HepG2 (cell line): ENCODE measurements at regions of chrX and their contacts with region 1.

Region 1: GRCh38 chrX:2391869-2392606 is 108.7 kb downstream of the DHRSX start:
- DNase-seq: peak; percentile 92
- ATAC-seq: peak; percentile 98
- H3K4me3 ChIP-seq: no peak overlapping the region
- H3K27ac ChIP-seq: peak overlapping the region; percentile 29
- H3K4me1 ChIP-seq: peaks cover 10% of the 10 kb centered on the region
- H3K27me3 ChIP-seq: no peaks in the 10 kb centered on the region
- CTCF ChIP-seq: peak; percentile 56
- EP300 ChIP-seq: peak in 1 of 2 experiments; percentile 30; a peak in 1 of 4 replicates
- POLR2A ChIP-seq: no peak
- RAD21 ChIP-seq: peak; percentile 64

Region 2: DNA sequence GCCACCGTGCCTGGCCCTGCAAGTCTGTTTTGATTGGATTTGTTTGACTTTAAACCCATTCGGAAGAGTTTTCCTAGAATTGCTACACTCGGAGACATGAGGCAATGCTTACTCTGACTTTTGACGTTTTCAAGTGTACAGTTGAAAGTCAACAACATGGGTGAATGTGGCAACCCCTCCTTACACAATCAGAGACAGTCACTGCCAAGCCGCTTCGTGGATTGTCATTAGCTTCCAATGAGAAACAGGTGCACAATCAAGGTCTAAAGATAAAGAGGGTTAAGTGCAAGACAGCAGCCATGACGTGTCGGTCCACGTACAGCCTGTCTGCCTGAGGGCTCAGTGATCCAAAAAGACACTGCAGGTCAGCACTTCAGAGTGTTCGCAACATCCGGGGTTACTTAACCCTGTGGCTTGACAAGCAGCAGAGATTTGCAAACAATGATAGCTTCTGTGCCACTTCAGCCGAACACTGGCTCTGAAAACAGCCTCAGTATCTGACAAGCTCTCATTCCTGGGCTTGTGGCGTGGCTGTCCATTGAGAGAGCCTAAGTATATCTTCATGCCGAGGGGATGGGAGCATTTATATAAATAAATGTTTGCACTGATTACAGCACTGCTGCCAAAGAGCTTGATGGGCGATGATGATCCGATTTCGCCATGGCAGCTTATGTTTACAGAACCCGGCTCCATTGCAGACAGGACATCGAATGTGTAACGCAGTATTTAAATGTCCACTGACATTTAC is 71.3 kb before region 1 on chrX:
- CTCF ChIA-PET with region 1: no interaction called
- POLR2A ChIA-PET with region 1: no interaction called
- in situ Hi-C with region 1: no loop called
- intact Hi-C with region 1: loop called (anchors 5 kb)
- DNase-seq: peak; percentile 97
- ATAC-seq: peak; percentile 84
- H3K4me3 ChIP-seq: peak overlapping the region; percentile 11 to 60 (median 34); a peak in 5 of 6 replicates
- H3K27ac ChIP-seq: peak overlapping the region; percentile 92
- H3K4me1 ChIP-seq: peaks cover 64% of the 10 kb centered on the region
- H3K27me3 ChIP-seq: no peaks in the 10 kb centered on the region; a peak in 1 of 5 replicates
- CTCF ChIP-seq: peak; percentile 13; the same call in 1 of the 2 replicates
- EP300 ChIP-seq: peak; percentile 89 to 92
- POLR2A ChIP-seq: peak in 1 of 2 experiments; percentile 43; a peak in 2 of 4 replicates
- RAD21 ChIP-seq: no peak